ENCODE measurements at regions of chr1 and their contacts with region 1.

Region 1: DNA sequence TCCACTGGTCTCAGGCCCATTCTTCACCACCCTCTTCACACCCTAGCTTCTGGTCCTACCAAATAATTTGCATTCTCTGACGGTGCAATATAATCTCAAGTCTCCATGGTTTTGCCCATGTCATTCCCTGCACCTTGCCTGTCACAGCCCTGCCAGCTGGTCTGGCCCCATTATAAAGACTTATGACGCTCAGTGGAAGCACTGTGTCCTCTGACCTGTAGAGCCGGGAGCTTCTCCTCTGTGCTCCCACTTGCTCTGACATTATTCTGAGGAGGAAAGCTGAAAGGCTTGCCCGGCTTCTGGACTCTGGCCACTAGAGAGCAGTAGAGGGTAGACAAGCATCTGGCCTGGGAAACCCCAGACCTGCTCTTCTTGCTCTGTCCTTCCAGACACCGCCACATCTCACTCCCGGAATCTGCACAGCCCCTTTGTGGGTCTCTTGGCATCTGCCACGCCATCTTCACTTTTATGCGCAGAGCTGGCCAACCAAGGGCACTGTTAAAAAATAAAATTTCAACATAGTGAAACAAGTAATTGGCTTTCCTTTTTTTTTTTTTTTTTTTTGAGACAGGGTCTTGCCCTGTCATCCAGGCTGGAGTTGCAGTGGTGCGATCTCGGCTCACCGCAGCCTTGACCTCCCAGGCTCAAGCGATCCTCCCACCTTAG is 44.4 kb downstream of the NENF start:
- DNase-seq: peak; percentile 88
- H3K4me3 ChIP-seq: no peak overlapping the region
- H3K27ac ChIP-seq: no peak overlapping the region
- H3K4me1 ChIP-seq: no peaks in the 10 kb centered on the region
- H3K27me3 ChIP-seq: no peaks in the 10 kb centered on the region
- CTCF ChIP-seq: peak; percentile 91

Region 2: GRCh38 chr1:212558693-212559480 is 81.7 kb after region 1 on chr1:
- CTCF ChIA-PET with region 1: interaction called, 16 read pairs
- POLR2A ChIA-PET with region 1: no interaction called
- intact Hi-C with region 1: no loop called
- DNase-seq: peak; percentile 95
- H3K4me3 ChIP-seq: peak overlapping the region; percentile 57
- H3K27ac ChIP-seq: peak overlapping the region; percentile 83
- H3K4me1 ChIP-seq: peaks cover 11% of the 10 kb centered on the region
- H3K27me3 ChIP-seq: no peaks in the 10 kb centered on the region
- CTCF ChIP-seq: no peak

Region 3: GRCh38 chr1:212595787-212596714 is 118.9 kb after region 1 on chr1:
- CTCF ChIA-PET with region 1: no interaction called
- POLR2A ChIA-PET with region 1: interaction called, 13 read pairs
- intact Hi-C with region 1: no loop called
- DNase-seq: peak; percentile 29
- H3K4me3 ChIP-seq: no peak overlapping the region
- H3K27ac ChIP-seq: no peak overlapping the region
- H3K4me1 ChIP-seq: no peaks in the 10 kb centered on the region
- H3K27me3 ChIP-seq: peaks cover 3% of the 10 kb centered on the region
- CTCF ChIP-seq: peak; percentile 49; the same call in 1 of the 2 replicates

Region 4: DNA sequence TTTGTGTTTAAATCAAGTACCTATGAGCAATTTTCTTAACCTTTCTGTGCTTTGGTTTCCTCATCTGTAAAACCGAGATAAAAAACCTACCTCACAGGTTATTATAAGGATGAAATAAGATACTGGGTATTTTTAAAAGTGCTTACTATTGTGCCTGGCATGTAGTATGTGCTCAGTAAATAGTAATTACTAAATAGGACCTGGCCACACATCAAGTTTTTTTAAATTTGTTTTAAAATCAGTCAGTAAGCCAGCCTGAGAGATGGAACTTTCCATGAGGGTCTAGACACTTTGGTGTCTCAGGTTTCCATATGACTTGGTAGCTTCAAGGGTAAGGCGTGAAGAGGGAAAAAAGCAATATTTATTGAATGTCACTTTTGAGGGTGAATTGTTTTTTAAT is 124.4 kb after region 1 on chr1:
- CTCF ChIA-PET with region 1: interaction called, 11 read pairs
- POLR2A ChIA-PET with region 1: no interaction called
- intact Hi-C with region 1: loop called (anchors 5 kb)
- DNase-seq: no peak
- H3K4me3 ChIP-seq: no peak overlapping the region
- H3K27ac ChIP-seq: no peak overlapping the region
- H3K4me1 ChIP-seq: peaks cover 10% of the 10 kb centered on the region
- H3K27me3 ChIP-seq: peaks cover 55% of the 10 kb centered on the region
- CTCF ChIP-seq: no peak

Region 5: GRCh38 chr1:212665241-212666115 is 188.3 kb after region 1 on chr1:
- CTCF ChIA-PET with region 1: interaction called, 14 read pairs
- POLR2A ChIA-PET with region 1: no interaction called
- intact Hi-C with region 1: loop called (anchors 5 kb)
- DNase-seq: peak; percentile 87
- H3K4me3 ChIP-seq: peak overlapping the region; percentile 50
- H3K27ac ChIP-seq: peak overlapping the region; percentile 49
- H3K4me1 ChIP-seq: peaks cover 17% of the 10 kb centered on the region
- H3K27me3 ChIP-seq: no peaks in the 10 kb centered on the region
- CTCF ChIP-seq: peak; percentile 97

Region 6: GRCh38 chr1:212782422-212783154 is 305.4 kb after region 1 on chr1:
- CTCF ChIA-PET with region 1: interaction called, 3 read pairs
- POLR2A ChIA-PET with region 1: no interaction called
- intact Hi-C with region 1: loop called (anchors 2 kb)
- DNase-seq: peak; percentile 45
- H3K4me3 ChIP-seq: no peak overlapping the region
- H3K27ac ChIP-seq: no peak overlapping the region
- H3K4me1 ChIP-seq: no peaks in the 10 kb centered on the region
- H3K27me3 ChIP-seq: no peaks in the 10 kb centered on the region
- CTCF ChIP-seq: peak; percentile 68

Region 7: DNA sequence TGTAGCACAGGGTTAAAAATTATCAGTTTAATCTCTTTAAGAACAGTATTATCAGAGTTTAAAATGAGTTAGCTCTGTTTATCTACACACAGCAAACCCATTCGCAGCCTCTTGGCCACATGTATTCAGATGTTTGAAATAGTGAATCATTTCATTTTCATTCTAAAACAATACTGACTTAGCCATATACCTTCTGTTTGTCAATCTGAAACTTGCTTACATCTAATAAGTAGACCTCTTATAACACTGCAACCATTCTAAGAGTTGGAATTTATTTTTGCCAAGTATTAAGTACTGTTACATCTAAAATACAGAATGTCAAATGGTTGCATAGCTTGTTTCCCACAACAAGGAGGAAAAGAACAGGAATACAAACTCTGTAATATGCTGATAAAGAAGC is 513.1 kb after region 1 on chr1:
- CTCF ChIA-PET with region 1: no interaction called
- POLR2A ChIA-PET with region 1: no interaction called
- intact Hi-C with region 1: loop called (anchors 5 kb)
- DNase-seq: no peak
- H3K4me3 ChIP-seq: no peak overlapping the region
- H3K27ac ChIP-seq: no peak overlapping the region
- H3K4me1 ChIP-seq: no peaks in the 10 kb centered on the region
- H3K27me3 ChIP-seq: no peaks in the 10 kb centered on the region
- CTCF ChIP-seq: no peak

Measured in A673 (cell line).